PC-9 (cell line): ENCODE measurements at regions of chr7 and their contacts with region 1.

Region 1: DNA sequence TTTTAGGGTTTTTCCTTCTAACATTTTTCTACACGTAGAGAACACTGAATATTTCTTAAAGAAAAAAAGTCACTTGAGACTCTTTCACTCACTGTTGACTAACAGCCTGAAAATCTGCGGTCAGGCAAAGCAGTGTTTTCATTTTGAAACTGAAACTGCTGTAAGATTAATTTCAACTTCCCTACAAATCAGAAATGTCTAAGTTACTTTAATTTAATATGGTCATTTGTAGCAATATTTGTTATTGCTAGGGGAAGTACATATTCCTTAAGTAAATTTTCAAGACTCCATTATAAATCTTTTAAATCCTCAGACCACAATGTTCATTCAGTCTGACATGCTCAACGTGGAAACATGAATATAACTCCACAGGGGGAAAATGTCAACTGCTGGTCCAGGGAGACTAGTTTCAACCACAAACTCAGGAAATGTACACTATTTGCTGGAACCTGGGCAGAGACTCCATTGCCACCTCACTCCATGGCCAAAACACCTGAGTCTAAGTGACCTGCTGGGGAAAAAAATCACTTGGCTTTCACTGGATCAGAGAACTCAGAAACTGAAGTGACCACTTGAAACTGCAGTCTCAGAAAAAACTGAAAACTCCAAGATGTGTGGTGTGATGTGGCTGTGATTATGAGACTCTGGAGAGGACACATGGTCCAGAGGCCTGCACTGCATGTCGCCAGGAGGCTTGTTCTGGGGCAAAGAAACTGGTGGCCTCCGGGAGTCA is 161.2 kb downstream of the TAX1BP1 start:
- DNase-seq: peak; percentile 34 to 58
- H3K4me3 ChIP-seq: peak overlapping the region; percentile 23; the same call in 1 of the 2 replicates
- H3K27ac ChIP-seq: peak overlapping the region; percentile 64
- H3K4me1 ChIP-seq: peaks cover 33% of the 10 kb centered on the region
- H3K27me3 ChIP-seq: no peaks in the 10 kb centered on the region
- CTCF ChIP-seq: no peak

Region 2: DNA sequence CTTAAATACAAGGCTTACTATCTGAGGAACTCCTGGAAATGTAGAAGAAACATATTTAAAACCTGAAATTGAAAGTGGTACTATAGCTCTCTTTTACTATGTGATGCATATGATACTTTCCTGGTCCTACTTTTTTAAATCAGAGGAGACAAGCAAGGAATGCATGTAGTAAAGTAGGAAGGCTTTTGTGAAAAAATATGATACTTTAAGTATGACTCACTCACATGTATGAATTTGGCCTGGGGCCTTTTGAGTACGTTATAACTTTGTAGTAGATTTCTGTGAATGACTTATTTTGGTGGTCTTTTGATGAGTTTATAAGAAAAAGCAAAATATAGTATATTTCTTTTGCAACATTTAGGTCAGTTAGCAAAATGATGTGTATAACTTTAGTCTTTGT is 107.4 kb before region 1 on chr7:
- CTCF ChIA-PET with region 1: no interaction called
- POLR2A ChIA-PET with region 1: interaction called, 10 read pairs
- intact Hi-C with region 1: no loop called
- DNase-seq: no peak
- H3K4me3 ChIP-seq: no peak overlapping the region
- H3K27ac ChIP-seq: no peak overlapping the region
- H3K4me1 ChIP-seq: no peaks in the 10 kb centered on the region
- H3K27me3 ChIP-seq: no peaks in the 10 kb centered on the region
- CTCF ChIP-seq: no peak

Region 3: GRCh38 chr7:27947586-27948278 is 46.5 kb after region 1 on chr7:
- CTCF ChIA-PET with region 1: no interaction called
- POLR2A ChIA-PET with region 1: no interaction called
- intact Hi-C with region 1: no loop called
- DNase-seq: no peak
- H3K4me3 ChIP-seq: no peak overlapping the region
- H3K27ac ChIP-seq: no peak overlapping the region
- H3K4me1 ChIP-seq: no peaks in the 10 kb centered on the region
- H3K27me3 ChIP-seq: no peaks in the 10 kb centered on the region
- CTCF ChIP-seq: no peak

Region 4: DNA sequence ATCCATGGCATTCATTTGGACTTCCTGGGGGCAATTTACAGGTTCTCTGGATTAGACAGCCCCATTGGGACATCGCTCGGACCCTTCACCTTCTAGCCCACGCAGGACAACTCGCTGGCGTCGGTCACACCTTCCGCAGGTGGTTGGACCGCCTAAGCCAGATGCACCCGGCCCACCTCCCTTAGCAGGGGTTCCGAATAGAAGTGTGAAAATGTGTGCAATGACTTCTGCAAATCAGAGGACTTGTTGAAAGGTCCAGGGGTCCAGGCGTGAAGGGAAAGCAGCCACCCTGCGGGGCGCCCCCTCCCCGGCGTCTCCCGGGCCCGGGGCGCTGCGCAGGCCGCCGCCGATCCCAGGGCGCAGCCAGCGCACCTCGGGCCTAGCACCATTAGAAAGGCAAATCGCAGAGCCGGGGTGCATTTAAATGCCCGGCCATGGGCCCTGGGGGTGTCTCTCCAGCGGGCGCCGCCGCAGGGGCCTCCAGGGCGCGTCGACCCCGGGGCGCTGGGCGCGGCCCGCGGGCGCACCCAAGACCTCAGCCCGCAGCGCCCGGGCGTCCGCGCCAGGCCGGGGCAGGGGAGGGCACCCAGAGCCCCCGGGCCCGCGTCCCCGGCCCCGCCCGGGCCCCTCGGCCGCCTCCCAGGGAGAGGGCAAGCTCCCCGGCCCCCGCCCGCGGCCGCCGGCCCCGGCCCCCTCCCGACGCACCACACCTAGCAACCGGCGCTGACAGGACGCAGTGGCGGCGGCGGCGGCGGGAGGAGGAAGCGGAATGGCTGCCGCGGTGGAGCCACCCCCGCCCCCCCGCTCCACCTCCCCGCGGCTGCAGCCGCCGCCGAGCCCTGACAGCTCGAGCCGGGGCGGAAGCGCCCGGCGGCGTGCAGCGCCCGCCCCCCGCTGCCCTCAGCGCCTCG is 278.2 kb after region 1 on chr7:
- CTCF ChIA-PET with region 1: no interaction called
- POLR2A ChIA-PET with region 1: no interaction called
- intact Hi-C with region 1: no loop called
- DNase-seq: peak; percentile 46 to 62
- H3K4me3 ChIP-seq: peak overlapping the region; percentile 48; the same call in 1 of the 2 replicates
- H3K27ac ChIP-seq: no peak overlapping the region
- H3K4me1 ChIP-seq: peaks cover 5% of the 10 kb centered on the region; the same call in 1 of the 2 replicates
- H3K27me3 ChIP-seq: no peaks in the 10 kb centered on the region
- CTCF ChIP-seq: no peak